Activated naive CD8-positive, alpha-beta T cell treated with anti-CD3 and anti-CD28 coated beads, Interleukin-2, amount 10 ng/mL, durations not matched to agents 7 days and 5 days (primary cell): ENCODE measurements at regions of chr17 and their contacts with region 1.

Region 1: GRCh38 chr17:28951991-28952975 is 965 bp upstream of the PHF12 start:
- DNase-seq: peak; percentile 88
- ATAC-seq: peak; percentile 67
- H3K4me3 Mint-ChIP-seq: no peak overlapping the region
- H3K27ac Mint-ChIP-seq: no peak overlapping the region
- H3K4me1 Mint-ChIP-seq: peaks cover 19% of the 10 kb centered on the region
- H3K27me3 Mint-ChIP-seq: no peaks in the 10 kb centered on the region

Region 2: DNA sequence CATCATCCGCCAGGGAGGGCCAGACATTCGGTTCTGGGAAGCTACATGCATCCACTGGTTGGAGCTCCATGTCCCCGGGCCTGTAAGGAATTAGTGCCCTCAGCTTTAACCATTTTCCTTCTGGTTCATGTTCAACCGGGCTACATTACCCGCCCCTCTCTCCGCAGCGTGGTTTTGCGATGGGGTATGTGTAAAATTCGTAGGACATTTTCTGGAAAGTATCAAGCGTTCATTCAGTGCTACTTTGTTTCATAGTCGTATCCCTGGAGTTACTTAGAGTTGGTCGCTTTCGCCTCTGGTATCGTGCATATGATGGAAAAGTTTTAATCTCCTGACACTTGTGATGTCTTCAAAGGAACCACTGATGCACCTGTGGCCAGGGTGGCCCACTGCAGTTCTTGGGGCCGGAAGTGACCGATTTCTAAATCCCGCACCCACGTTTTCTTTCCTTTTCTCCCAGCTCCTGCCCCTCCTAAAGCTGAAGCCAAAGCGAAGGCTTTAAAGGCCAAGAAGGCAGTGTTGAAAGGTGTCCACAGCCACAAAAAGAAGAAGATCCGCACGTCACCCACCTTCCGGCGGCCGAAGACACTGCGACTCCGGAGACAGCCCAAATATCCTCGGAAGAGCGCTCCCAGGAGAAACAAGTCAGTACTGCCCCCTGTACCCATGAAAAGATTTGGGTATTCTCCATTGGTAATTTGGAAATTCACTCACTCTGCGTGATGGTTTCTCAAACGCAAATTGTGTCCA is 231.9 kb before region 1 on chr17:
- POLR2A ChIA-PET with region 1: interaction called, 53 read pairs
- DNase-seq: no peak
- ATAC-seq: no peak
- H3K4me3 Mint-ChIP-seq: peak overlapping the region; percentile 95
- H3K27ac Mint-ChIP-seq: peak overlapping the region; percentile 97
- H3K4me1 Mint-ChIP-seq: peaks cover 43% of the 10 kb centered on the region
- H3K27me3 Mint-ChIP-seq: peaks cover 19% of the 10 kb centered on the region

Region 3: GRCh38 chr17:28896884-28897768 is 55.2 kb before region 1 on chr17 and contains the start of gene FLOT2:
- POLR2A ChIA-PET with region 1: interaction called, 10 read pairs
- DNase-seq: peak; percentile 80
- ATAC-seq: peak; percentile 62
- H3K4me3 Mint-ChIP-seq: peak within 1 kb of the TSS; percentile 98
- H3K27ac Mint-ChIP-seq: peak within 1 kb of the TSS; percentile 97
- H3K4me1 Mint-ChIP-seq: peaks cover 56% of the 10 kb centered on the region
- H3K27me3 Mint-ChIP-seq: no peaks in the 10 kb centered on the region
- total RNA-seq, gene FLOT2: 195 to 216 TPM

Region 4: DNA sequence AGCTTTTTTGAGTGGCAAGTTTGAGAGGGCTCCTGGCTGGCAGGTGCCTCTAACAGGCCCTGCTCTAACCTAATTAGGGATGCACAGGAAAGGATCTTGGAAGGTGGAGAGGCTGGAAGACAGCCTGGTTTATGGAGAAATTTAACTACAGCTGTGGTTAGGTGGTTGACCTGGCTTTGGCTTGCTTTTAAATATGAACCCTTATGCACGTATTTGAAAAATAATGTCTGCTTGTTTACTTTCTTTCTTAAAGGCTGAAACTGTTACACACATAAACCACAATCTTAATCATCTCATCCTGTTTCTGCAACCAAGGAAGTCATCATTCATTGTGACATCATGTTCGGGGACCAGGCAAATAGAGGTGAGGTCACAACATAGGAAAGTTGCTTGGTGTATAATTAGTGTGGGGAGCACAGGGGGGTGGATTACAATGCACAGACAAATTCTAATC is 26.3 kb before region 1 on chr17:
- POLR2A ChIA-PET with region 1: interaction called, 10 read pairs
- DNase-seq: no peak
- ATAC-seq: peak; percentile 87
- H3K4me3 Mint-ChIP-seq: peak overlapping the region; percentile 62
- H3K27ac Mint-ChIP-seq: peak overlapping the region; percentile 88
- H3K4me1 Mint-ChIP-seq: peaks cover 35% of the 10 kb centered on the region
- H3K27me3 Mint-ChIP-seq: no peaks in the 10 kb centered on the region

Region 5: DNA sequence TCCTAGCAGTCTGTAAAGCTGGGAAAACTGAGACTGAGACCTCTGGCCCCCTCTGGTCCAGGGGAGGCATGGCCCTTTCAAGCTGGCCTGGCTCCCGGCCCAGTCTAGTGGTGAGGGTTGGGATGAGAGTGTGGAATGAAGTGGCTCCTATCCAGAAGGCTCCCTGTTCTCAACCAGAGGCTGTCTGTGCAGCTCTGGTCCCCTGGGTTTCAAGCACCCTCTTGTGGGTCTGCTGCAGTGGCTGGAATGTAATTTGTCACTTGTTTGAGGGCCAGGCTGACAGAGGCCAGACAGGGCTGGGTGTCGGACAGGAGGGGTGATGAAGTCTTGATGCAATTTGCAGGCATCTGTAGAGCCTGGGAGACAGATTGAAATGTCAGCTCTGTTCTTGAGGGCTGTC is 21.1 kb after region 1 on chr17:
- POLR2A ChIA-PET with region 1: no interaction called
- DNase-seq: no peak
- ATAC-seq: no peak
- H3K4me3 Mint-ChIP-seq: no peak overlapping the region
- H3K27ac Mint-ChIP-seq: no peak overlapping the region
- H3K4me1 Mint-ChIP-seq: peaks cover under 1% of the 10 kb centered on the region
- H3K27me3 Mint-ChIP-seq: no peaks in the 10 kb centered on the region